ENCODE measurements at regions of chr3 and their contacts with region 1.

Region 1: GRCh38 chr3:176430244-176431037 is 766.8 kb downstream of the TBL1XR1 start:
- ATAC-seq: peak in 7 of 8 experiments; percentile 37 to 67 (median 55)
- H3K4me3 ChIP-seq: no peak overlapping the region
- H3K27ac ChIP-seq: no peak overlapping the region
- H3K4me1 ChIP-seq: peaks cover 0 to 5% of the 10 kb centered on the region in 2 donors

Region 2: DNA sequence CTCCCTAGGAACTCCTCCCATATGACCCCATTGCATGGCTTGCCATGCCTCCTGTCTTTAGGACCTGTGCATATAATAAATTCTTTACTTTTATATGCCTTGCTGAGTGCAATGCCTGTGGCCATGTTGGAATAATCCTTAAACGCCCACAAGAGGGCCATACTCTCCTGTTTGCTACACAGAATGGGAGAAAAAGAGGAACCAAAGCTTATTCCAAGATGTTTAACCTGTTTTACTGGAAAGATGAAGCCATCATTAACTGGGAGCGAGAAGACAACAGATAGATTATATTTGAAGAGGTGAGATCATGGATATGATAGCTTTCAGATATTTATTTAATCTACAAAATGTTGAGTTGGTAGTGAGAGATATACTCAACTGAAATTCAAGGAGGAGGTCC is 473.4 kb before region 1 on chr3:
- in situ Hi-C with region 1: loop called in 1 of 9 experiments (anchors 25 kb)
- ATAC-seq: peak in 3 of 8 experiments; percentile 25 to 69 (median 54)
- H3K4me3 ChIP-seq: no peak overlapping the region
- H3K27ac ChIP-seq: no peak overlapping the region
- H3K4me1 ChIP-seq: no peaks in the 10 kb centered on the region

Region 3: DNA sequence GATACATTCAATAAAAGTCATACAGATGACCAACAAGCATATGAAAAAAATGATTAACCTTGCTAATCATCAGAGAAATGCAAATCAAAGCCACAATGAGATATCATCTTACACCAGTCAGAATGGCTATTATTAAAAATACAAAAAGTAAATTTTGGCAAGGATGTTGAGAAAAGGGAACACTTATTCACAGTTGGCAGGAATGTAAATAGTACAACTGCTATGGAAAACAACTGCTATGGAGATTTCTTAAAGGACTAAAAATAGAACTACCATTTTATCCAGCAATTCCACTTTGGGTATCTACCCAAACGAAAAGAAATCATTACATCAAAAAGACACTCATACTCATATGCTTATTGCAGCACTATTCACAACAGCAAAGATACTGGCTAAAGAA is 354.9 kb before region 1 on chr3:
- in situ Hi-C with region 1: no loop called
- ATAC-seq: no peak
- H3K4me3 ChIP-seq: no peak overlapping the region
- H3K27ac ChIP-seq: no peak overlapping the region
- H3K4me1 ChIP-seq: peaks cover 0 to 1% of the 10 kb centered on the region in 2 donors

Region 4: GRCh38 chr3:176699288-176699687 is 268.8 kb after region 1 on chr3:
- in situ Hi-C with region 1: no loop called
- ATAC-seq: no peak
- H3K4me3 ChIP-seq: no peak overlapping the region
- H3K27ac ChIP-seq: no peak overlapping the region
- H3K4me1 ChIP-seq: peaks cover 20 to 32% of the 10 kb centered on the region in 2 donors

Region 5: GRCh38 chr3:177359593-177360357 is 929.3 kb after region 1 on chr3:
- in situ Hi-C with region 1: no loop called
- ATAC-seq: peak; percentile 86 to 98 (median 88)
- H3K4me3 ChIP-seq: peak overlapping the region; percentile 15 to 27 (median 18)
- H3K27ac ChIP-seq: peak overlapping the region; percentile 72 to 85
- H3K4me1 ChIP-seq: peaks cover 43 to 53% of the 10 kb centered on the region in 2 donors